Activated CD8-positive, alpha-beta T cell treated with anti-CD3 and anti-CD28 coated beads for 36 hours (primary cell): ENCODE measurements at regions of chr5 and their contacts with region 1.

Region 1: GRCh38 chr5:157259699-157260098 is 6.2 kb upstream of the CYFIP2 start:
- DNase-seq: no peak
- ATAC-seq: peak; percentile 25
- H3K4me3 Mint-ChIP-seq: no peak overlapping the region
- H3K27ac Mint-ChIP-seq: peak overlapping the region; percentile 30
- H3K4me1 Mint-ChIP-seq: peaks cover 80% of the 10 kb centered on the region
- H3K27me3 Mint-ChIP-seq: no peaks in the 10 kb centered on the region
- CTCF ChIP-seq: no peak

Region 2: GRCh38 chr5:157245477-157245876 is 14.2 kb before region 1 on chr5:
- CTCF ChIA-PET with region 1: interaction called, 4 read pairs
- POLR2A ChIA-PET with region 1: interaction called, 18 read pairs
- intact Hi-C with region 1: no loop called
- DNase-seq: no peak
- ATAC-seq: no peak
- H3K4me3 Mint-ChIP-seq: no peak overlapping the region
- H3K27ac Mint-ChIP-seq: peak overlapping the region; percentile 95
- H3K4me1 Mint-ChIP-seq: peaks cover 88% of the 10 kb centered on the region
- H3K27me3 Mint-ChIP-seq: no peaks in the 10 kb centered on the region
- CTCF ChIP-seq: no peak

Region 3: GRCh38 chr5:157342822-157343402 is 83.2 kb after region 1 on chr5:
- CTCF ChIA-PET with region 1: no interaction called
- POLR2A ChIA-PET with region 1: no interaction called
- intact Hi-C with region 1: no loop called
- DNase-seq: peak; percentile 46
- ATAC-seq: no peak
- H3K4me3 Mint-ChIP-seq: no peak overlapping the region
- H3K27ac Mint-ChIP-seq: peak overlapping the region; percentile 50
- H3K4me1 Mint-ChIP-seq: peaks cover 39% of the 10 kb centered on the region
- H3K27me3 Mint-ChIP-seq: no peaks in the 10 kb centered on the region
- CTCF ChIP-seq: peak; percentile 69

Region 4: GRCh38 chr5:157449011-157449723 is 189.5 kb after region 1 on chr5:
- CTCF ChIA-PET with region 1: no interaction called
- POLR2A ChIA-PET with region 1: no interaction called
- intact Hi-C with region 1: no loop called
- DNase-seq: no peak
- ATAC-seq: no peak
- H3K4me3 Mint-ChIP-seq: no peak overlapping the region
- H3K27ac Mint-ChIP-seq: no peak overlapping the region
- H3K4me1 Mint-ChIP-seq: no peaks in the 10 kb centered on the region
- H3K27me3 Mint-ChIP-seq: no peaks in the 10 kb centered on the region
- CTCF ChIP-seq: no peak